H1 (cell line): ENCODE measurements at regions of chr5 and their contacts with region 1.

Region 1: GRCh38 chr5:149960272-149961185 is at the start of gene SLC26A2:
- DNase-seq: peak; percentile 92 to 94
- H3K4me3 ChIP-seq: peak within 1 kb of the TSS; percentile 72 to 87 (median 80)
- H3K27ac ChIP-seq: peak within 1 kb of the TSS; percentile 26; the same call in 1 of the 2 replicates
- H3K4me1 ChIP-seq: peaks cover 0 to 8% (median 5%) of the 10 kb centered on the region in 4 experiments; a peak in 4 of 7 replicates
- H3K27me3 ChIP-seq: peaks cover 0 to 5% (median 1%) of the 10 kb centered on the region in 4 experiments; a peak in 3 of 7 replicates
- CTCF ChIP-seq: no peak
- EP300 ChIP-seq: no peak
- POLR2A ChIP-seq: peak; percentile 70 to 92
- RAD21 ChIP-seq: no peak
- total RNA-seq, gene SLC26A2: 10.9 and 11.4 TPM in 2 replicates

Region 2: GRCh38 chr5:149636851-149637246 is 323.7 kb before region 1 on chr5:
- CTCF ChIA-PET with region 1: interaction called, 10 read pairs
- POLR2A ChIA-PET with region 1: no interaction called
- DNase-seq: peak; percentile 49 to 83
- H3K4me3 ChIP-seq: no peak overlapping the region
- H3K27ac ChIP-seq: no peak overlapping the region
- H3K4me1 ChIP-seq: peaks cover 12 to 16% (median 12%) of the 10 kb centered on the region in 4 experiments
- H3K27me3 ChIP-seq: no peaks in the 10 kb centered on the region; a peak in 1 of 7 replicates
- CTCF ChIP-seq: peak; percentile 85 to 93 (median 91)
- EP300 ChIP-seq: no peak
- POLR2A ChIP-seq: no peak
- RAD21 ChIP-seq: peak; percentile 97 to 98

Region 3: GRCh38 chr5:149719678-149720077 is 240.9 kb before region 1 on chr5:
- CTCF ChIA-PET with region 1: no interaction called
- POLR2A ChIA-PET with region 1: no interaction called
- DNase-seq: no peak
- H3K4me3 ChIP-seq: no peak overlapping the region
- H3K27ac ChIP-seq: no peak overlapping the region
- H3K4me1 ChIP-seq: peaks cover 0 to 4% (median under 1%) of the 10 kb centered on the region in 4 experiments; a peak in 5 of 7 replicates
- H3K27me3 ChIP-seq: no peaks in the 10 kb centered on the region
- CTCF ChIP-seq: no peak
- EP300 ChIP-seq: no peak
- POLR2A ChIP-seq: no peak
- RAD21 ChIP-seq: no peak

Region 4: DNA sequence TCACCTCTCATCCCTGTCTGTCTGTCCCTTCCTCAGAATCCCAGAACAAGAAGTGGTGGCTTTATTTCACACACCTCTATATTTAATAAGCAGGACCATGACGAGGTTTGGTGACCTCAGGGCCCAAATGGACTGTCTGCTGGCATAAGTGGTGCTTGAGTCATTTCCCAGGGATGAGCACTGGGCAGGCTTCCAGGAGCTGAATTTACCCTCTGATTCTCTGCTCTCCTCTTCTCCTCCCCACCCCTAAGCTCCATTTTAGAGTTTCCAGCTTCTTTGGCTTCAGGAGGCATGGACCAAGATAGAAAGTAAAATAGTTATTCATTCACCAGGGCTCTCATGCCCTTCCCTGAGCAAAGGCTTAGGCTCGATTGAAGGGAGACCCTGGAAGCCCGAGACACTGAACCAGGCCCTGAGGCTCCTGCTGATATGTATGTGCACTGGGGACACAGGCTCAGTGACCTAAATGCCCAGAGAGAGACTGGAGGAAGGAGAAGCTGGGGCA is 161.4 kb before region 1 on chr5:
- CTCF ChIA-PET with region 1: no interaction called
- POLR2A ChIA-PET with region 1: no interaction called
- DNase-seq: no peak
- H3K4me3 ChIP-seq: no peak overlapping the region
- H3K27ac ChIP-seq: no peak overlapping the region
- H3K4me1 ChIP-seq: peaks cover 0 to 5% (median 0%) of the 10 kb centered on the region in 4 experiments; a peak in 1 of 7 replicates
- H3K27me3 ChIP-seq: no peaks in the 10 kb centered on the region
- CTCF ChIP-seq: no peak
- EP300 ChIP-seq: no peak
- POLR2A ChIP-seq: no peak
- RAD21 ChIP-seq: no peak

Region 5: GRCh38 chr5:149852641-149853330 is 107.7 kb before region 1 on chr5:
- CTCF ChIA-PET with region 1: interaction called, 10 read pairs
- POLR2A ChIA-PET with region 1: no interaction called
- DNase-seq: peak; percentile 56 to 81
- H3K4me3 ChIP-seq: no peak overlapping the region
- H3K27ac ChIP-seq: no peak overlapping the region
- H3K4me1 ChIP-seq: peaks cover 0 to 2% (median 0%) of the 10 kb centered on the region in 4 experiments; a peak in 1 of 7 replicates
- H3K27me3 ChIP-seq: no peaks in the 10 kb centered on the region
- CTCF ChIP-seq: peak; percentile 79 to 96 (median 84)
- EP300 ChIP-seq: no peak
- POLR2A ChIP-seq: no peak
- RAD21 ChIP-seq: peak; percentile 67 to 83

Region 6: GRCh38 chr5:149872351-149873040 is 88.0 kb before region 1 on chr5:
- CTCF ChIA-PET with region 1: interaction called, 15 read pairs
- POLR2A ChIA-PET with region 1: no interaction called
- DNase-seq: no peak
- H3K4me3 ChIP-seq: no peak overlapping the region
- H3K27ac ChIP-seq: no peak overlapping the region
- H3K4me1 ChIP-seq: peaks cover 0 to 2% (median 0%) of the 10 kb centered on the region in 4 experiments; a peak in 2 of 7 replicates
- H3K27me3 ChIP-seq: no peaks in the 10 kb centered on the region
- CTCF ChIP-seq: no peak
- EP300 ChIP-seq: no peak
- POLR2A ChIP-seq: no peak
- RAD21 ChIP-seq: no peak

Region 7: GRCh38 chr5:149902177-149902576 is 58.4 kb before region 1 on chr5:
- CTCF ChIA-PET with region 1: interaction called, 15 read pairs
- POLR2A ChIA-PET with region 1: no interaction called
- DNase-seq: no peak
- H3K4me3 ChIP-seq: no peak overlapping the region
- H3K27ac ChIP-seq: no peak overlapping the region
- H3K4me1 ChIP-seq: no peaks in the 10 kb centered on the region
- H3K27me3 ChIP-seq: no peaks in the 10 kb centered on the region
- CTCF ChIP-seq: peak; percentile 35 to 54 (median 52)
- EP300 ChIP-seq: no peak
- POLR2A ChIP-seq: no peak
- RAD21 ChIP-seq: peak; percentile 54 to 63

Region 8: GRCh38 chr5:149932445-149933350 is 27.8 kb before region 1 on chr5:
- CTCF ChIA-PET with region 1: interaction called, 80 read pairs
- POLR2A ChIA-PET with region 1: no interaction called
- DNase-seq: peak in 1 of 2 experiments; percentile 72
- H3K4me3 ChIP-seq: no peak overlapping the region
- H3K27ac ChIP-seq: no peak overlapping the region
- H3K4me1 ChIP-seq: peaks cover 0 to 3% (median 0%) of the 10 kb centered on the region in 4 experiments; a peak in 1 of 7 replicates
- H3K27me3 ChIP-seq: no peaks in the 10 kb centered on the region; a peak in 2 of 7 replicates
- CTCF ChIP-seq: peak; percentile 60 to 75 (median 67)
- EP300 ChIP-seq: no peak
- POLR2A ChIP-seq: no peak
- RAD21 ChIP-seq: peak; percentile 22 to 49

Region 9: GRCh38 chr5:149979896-149980295 is 19.4 kb after region 1 on chr5:
- CTCF ChIA-PET with region 1: interaction called, 10 read pairs
- POLR2A ChIA-PET with region 1: interaction called, 3 read pairs
- DNase-seq: no peak
- H3K4me3 ChIP-seq: no peak overlapping the region
- H3K27ac ChIP-seq: no peak overlapping the region
- H3K4me1 ChIP-seq: no peaks in the 10 kb centered on the region
- H3K27me3 ChIP-seq: no peaks in the 10 kb centered on the region
- CTCF ChIP-seq: no peak
- EP300 ChIP-seq: no peak
- POLR2A ChIP-seq: no peak
- RAD21 ChIP-seq: no peak